Activated CD4-positive, alpha-beta T cell treated with anti-CD3 and anti-CD28 coated beads for 36 hours (primary cell): ENCODE measurements at regions of chr22 and their contacts with region 1.

Region 1: DNA sequence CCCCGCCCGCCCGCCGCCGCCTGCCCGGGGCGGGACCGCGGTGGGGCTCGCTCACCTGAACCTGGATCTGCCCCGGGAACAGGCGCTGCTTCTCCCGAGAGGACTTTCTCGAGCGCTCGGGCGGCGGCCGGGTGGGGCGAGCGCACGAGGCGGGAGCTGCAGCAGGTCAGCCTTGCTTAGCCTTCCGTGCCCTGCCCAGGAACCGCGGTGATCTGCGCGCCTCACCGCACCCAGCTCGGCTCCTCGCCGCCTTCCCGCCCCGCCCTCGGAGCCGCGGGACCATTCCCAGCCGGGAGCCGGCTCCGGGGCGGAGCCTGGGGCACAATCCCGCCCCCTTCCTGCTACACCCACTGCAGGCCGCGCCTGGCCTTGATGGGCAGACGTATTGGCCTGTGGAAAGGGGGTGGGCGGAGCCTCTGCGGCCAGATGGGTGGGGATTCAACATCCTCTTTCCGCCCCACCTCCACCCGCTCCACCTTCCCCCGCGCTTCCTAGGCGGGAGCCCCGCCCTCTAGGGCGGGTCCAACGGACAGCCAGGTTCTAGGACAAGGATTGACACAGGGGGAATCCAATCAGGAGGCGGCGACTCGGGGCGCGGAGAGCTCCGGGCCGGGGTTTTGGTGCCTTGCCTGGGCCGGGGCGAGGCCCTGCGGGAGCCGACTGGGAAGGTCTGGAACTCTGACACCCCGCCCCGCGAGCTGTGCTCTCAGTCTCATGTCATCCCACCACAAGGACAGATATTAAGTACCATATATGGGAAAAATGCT is at the start of gene MYH9:
- DNase-seq: peak; percentile 100
- ATAC-seq: peak; percentile 78
- H3K4me3 Mint-ChIP-seq: peak within 1 kb of the TSS; percentile 99
- H3K27ac Mint-ChIP-seq: peak within 1 kb of the TSS; percentile 98
- H3K4me1 Mint-ChIP-seq: peaks cover 30% of the 10 kb centered on the region
- H3K27me3 Mint-ChIP-seq: no peaks in the 10 kb centered on the region
- total RNA-seq, gene MYH9: 720 to 773 TPM

Region 2: DNA sequence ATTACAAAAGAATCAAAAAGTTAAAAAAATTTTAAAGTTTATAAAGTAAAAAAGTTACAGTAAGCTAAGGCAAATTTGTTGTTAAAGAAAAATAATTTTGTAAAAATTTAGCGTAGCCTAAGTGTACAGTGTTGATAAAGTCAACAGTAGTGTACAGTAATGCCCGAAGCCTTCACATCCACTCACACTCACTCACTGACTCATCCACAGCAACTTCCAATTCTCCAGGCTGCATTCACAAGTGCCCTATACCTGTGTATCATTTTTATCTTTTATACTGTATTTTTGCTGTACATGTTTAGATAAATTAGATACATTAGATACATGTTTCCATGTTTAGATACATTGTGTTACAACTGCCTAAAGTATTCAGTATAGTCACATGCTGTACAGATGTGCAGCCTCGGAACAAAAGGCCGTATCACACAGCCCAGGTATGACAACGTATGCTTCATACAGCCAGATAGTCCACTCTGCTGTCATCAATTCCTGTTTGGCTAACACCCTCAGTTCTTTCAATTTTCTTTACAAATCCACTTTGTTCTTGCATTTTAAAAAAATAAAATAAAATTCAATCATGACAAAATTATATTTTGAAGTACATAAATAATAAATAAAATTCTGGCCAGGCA is 440.0 kb before region 1 on chr22:
- CTCF ChIA-PET with region 1: no interaction called
- POLR2A ChIA-PET with region 1: no interaction called
- intact Hi-C with region 1: no loop called
- DNase-seq: no peak
- ATAC-seq: no peak
- H3K4me3 Mint-ChIP-seq: no peak overlapping the region
- H3K27ac Mint-ChIP-seq: no peak overlapping the region
- H3K4me1 Mint-ChIP-seq: no peaks in the 10 kb centered on the region
- H3K27me3 Mint-ChIP-seq: no peaks in the 10 kb centered on the region

Region 3: DNA sequence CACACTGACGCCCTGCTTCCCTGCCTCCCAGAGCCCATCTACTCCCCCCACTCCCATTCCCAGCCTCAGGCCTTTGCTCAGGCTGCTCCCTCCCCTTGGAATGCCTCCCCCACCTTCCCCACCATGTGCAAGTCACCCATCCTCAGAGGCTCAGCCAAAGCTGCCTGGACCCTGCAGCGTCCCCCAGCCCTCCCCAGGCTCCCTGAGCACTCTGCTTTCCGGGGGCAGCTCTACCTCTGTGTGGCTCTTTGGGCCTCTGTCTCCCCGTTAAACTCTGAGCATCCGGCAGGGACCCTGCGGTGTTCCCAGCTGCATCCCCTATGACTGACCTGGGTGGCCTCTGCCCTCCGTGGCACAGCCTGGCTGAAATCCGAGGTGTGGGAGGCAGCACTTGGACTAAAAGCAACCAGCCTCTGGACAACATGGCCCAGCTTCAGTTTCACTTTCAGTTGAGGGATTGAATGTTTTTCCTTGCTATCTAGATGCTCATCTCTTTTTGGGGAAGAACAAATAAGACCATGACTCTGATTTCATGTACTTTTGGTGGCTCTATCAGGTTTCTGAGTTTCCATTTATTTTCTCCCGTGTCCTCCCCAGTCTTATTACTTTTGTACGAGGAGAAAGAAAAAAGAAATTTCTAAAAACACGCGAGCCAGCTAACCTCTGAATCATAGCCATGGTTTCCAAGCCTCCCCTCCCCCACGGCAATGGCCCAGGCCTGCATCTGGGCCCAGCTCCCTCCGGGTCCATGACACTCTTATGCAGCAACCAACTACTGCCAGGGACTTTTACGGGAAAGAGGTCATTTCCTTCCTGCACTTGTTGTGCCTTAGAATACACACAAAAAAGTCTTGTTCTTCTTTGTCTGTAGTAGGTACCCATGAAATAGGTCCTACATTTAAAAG is 231.2 kb before region 1 on chr22:
- CTCF ChIA-PET with region 1: no interaction called
- POLR2A ChIA-PET with region 1: no interaction called
- intact Hi-C with region 1: loop called in 1 of 2 experiments (anchors 5 kb)
- DNase-seq: peak; percentile 89
- ATAC-seq: peak; percentile 72
- H3K4me3 Mint-ChIP-seq: peak overlapping the region; percentile 84
- H3K27ac Mint-ChIP-seq: peak overlapping the region; percentile 99
- H3K4me1 Mint-ChIP-seq: peaks cover 94% of the 10 kb centered on the region
- H3K27me3 Mint-ChIP-seq: no peaks in the 10 kb centered on the region

Region 4: GRCh38 chr22:36331306-36331911 is 56.5 kb before region 1 on chr22:
- CTCF ChIA-PET with region 1: interaction called, 18 read pairs
- POLR2A ChIA-PET with region 1: interaction called, 15 read pairs
- intact Hi-C with region 1: loop called (anchors 1 kb)
- DNase-seq: peak; percentile 88
- ATAC-seq: peak; percentile 51
- H3K4me3 Mint-ChIP-seq: peak overlapping the region; percentile 77
- H3K27ac Mint-ChIP-seq: peak overlapping the region; percentile 99
- H3K4me1 Mint-ChIP-seq: peaks cover 95% of the 10 kb centered on the region
- H3K27me3 Mint-ChIP-seq: no peaks in the 10 kb centered on the region

Region 5: GRCh38 chr22:36365020-36365411 is 22.9 kb before region 1 on chr22:
- CTCF ChIA-PET with region 1: interaction called, 6 read pairs
- POLR2A ChIA-PET with region 1: interaction called, 16 read pairs
- intact Hi-C with region 1: loop called (anchors 1 kb)
- DNase-seq: peak; percentile 96
- ATAC-seq: peak; percentile 89
- H3K4me3 Mint-ChIP-seq: peak overlapping the region; percentile 67
- H3K27ac Mint-ChIP-seq: peak overlapping the region; percentile 96
- H3K4me1 Mint-ChIP-seq: peaks cover 99% of the 10 kb centered on the region
- H3K27me3 Mint-ChIP-seq: no peaks in the 10 kb centered on the region

Region 6: DNA sequence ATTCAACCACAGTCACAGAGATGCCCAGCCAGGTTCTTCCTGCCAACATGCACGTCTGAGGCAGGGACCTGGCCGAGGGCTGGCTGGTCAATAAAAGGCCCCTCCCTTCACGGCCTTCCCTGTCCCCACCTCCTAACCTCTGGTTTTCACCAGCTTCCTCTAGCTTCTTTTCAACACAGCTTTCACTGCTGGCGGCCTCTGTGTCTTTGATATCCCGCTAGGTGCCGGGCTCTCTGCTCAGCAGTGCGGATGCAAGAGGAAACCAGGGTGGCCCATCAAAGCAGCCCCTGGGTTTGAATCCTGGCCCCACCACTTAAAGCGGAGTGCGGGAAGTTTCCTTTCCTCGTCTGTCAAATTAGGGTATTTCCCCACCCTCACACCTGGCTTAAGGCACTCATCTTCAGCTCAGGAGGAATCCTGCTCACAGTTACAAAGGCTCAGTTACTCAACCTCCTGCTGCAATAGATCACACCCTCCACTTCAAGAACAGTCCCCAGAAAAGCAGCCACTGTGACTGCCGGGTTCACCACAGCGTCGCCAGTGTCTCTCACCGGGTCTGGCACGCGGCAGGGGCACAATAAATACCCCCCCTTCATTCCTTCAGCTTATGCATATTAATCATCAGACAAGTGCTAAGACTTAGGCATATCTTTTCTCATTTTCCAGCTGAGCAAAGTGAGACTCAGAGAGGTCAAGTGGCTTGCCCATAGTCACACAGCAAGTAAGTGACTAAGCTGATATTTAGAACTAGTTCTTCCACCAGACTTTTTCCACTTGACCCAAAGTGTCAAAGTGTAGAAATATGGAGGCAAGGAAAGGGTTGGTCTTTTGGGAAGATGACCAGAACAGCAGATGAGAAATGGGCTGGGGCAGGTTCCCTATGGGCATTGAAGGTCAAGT is 47.8 kb after region 1 on chr22:
- CTCF ChIA-PET with region 1: no interaction called
- POLR2A ChIA-PET with region 1: interaction called, 5 read pairs
- intact Hi-C with region 1: loop called in 1 of 2 experiments (anchors 1 kb)
- DNase-seq: peak; percentile 75
- ATAC-seq: peak; percentile 86
- H3K4me3 Mint-ChIP-seq: peak overlapping the region; percentile 58
- H3K27ac Mint-ChIP-seq: peak overlapping the region; percentile 83
- H3K4me1 Mint-ChIP-seq: peaks cover 48% of the 10 kb centered on the region
- H3K27me3 Mint-ChIP-seq: no peaks in the 10 kb centered on the region

Region 7: GRCh38 chr22:36470162-36470993 is 82.4 kb after region 1 on chr22:
- CTCF ChIA-PET with region 1: interaction called, 5 read pairs
- POLR2A ChIA-PET with region 1: no interaction called
- intact Hi-C with region 1: loop called in 1 of 2 experiments (anchors 1 kb)
- DNase-seq: peak; percentile 89
- ATAC-seq: peak; percentile 94
- H3K4me3 Mint-ChIP-seq: no peak overlapping the region
- H3K27ac Mint-ChIP-seq: peak overlapping the region; percentile 72
- H3K4me1 Mint-ChIP-seq: peaks cover 29% of the 10 kb centered on the region
- H3K27me3 Mint-ChIP-seq: no peaks in the 10 kb centered on the region

Region 8: DNA sequence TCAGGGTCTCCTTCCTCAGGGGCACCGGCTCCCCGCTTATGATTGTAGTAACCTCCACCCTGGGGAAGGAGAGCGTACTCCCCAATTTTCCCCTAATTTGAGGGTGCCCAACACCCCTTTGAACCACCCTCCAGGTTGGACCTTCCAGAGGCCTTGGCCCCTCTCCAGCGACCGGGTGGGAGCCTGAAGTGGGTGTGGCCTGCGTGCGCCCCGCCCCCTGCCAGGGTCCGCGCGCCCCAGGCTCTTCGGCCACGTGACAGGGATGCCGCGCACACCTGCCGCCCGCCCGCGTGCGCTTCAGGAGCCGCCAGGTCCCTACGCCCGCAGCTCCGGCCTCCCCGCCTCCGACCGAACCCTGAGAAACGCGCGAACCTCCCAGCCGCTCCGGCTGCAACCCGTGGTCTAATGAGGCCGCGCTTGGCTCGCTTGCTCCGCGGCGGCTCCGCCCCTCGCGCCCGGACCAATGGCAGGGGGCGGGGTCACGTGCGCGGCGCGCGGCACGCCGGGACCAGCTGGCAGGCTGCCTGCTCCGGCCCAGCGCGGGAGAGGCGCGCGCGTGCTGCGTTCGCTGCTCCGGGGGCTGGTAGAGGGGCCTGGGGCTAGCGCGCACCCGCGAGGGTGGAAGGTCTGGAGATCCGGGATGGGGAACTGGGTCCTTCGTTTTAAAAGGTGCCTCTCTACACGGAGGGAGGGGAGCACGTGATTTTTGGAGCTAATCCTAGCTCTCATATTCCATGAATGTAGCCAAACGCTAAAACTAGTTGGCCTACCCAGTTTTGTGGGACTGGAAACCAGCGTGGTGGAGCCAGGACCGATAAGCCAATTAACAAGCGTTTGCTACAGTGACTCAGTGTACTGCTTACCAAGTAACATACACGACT is 118.9 kb after region 1 on chr22 and contains the start of gene FOXRED2:
- CTCF ChIA-PET with region 1: no interaction called
- POLR2A ChIA-PET with region 1: no interaction called
- intact Hi-C with region 1: no loop called
- DNase-seq: peak; percentile 94
- ATAC-seq: peak; percentile 95
- H3K4me3 Mint-ChIP-seq: peak within 1 kb of the TSS; percentile 49
- H3K27ac Mint-ChIP-seq: peak within 1 kb of the TSS; percentile 58
- H3K4me1 Mint-ChIP-seq: peaks cover 13% of the 10 kb centered on the region
- H3K27me3 Mint-ChIP-seq: no peaks in the 10 kb centered on the region
- total RNA-seq, gene FOXRED2: 15.7 to 16.6 TPM

Region 9: DNA sequence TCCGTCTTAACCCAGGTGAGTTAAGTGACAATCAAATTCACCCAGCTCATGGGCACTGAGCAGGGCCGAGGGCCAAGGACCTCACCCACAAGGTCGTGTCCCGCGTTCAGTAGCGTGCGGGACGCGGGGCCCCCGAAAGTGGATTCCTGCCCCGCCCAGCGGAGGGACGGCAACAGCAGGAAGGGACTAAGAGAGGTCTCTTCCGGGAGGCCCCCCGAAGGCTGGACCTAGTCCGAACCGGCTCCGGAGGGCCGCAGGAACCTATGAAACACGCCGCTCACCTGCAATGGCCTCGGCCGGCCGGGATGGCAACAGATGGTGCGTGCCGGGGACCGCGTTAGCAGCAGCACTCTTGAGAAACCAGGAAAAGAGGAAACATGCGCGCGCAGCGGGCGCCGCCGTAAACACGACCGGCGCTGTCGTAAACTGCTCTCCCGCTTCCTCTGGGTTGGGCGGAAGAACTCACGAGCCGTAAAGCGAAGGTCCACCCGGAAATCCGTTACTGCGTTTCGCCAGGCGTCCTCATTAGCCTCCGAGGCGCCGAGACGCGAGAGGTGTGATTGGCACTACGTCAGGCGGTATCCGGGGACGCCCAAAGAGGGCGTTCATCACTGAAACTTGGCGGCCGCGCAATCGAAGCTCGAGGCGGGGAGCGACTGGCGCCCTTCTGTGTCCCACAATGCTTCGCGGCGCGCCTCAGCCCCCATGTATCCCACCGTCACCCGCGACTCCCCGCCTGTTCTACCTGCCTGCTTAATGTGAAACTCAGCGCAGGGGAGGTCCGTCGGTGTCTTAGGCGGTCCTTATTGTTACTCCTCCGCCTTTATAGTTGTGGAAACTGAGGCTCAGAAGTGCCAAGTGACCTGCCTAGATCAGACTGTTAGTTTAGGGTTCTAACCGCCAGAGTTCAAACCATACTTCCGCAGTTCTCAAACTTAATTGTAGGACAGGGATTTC is 141.1 kb after region 1 on chr22 and contains the start of gene EIF3D:
- CTCF ChIA-PET with region 1: no interaction called
- POLR2A ChIA-PET with region 1: no interaction called
- intact Hi-C with region 1: loop called (anchors 1 to 5 kb)
- DNase-seq: peak; percentile 99
- ATAC-seq: peak; percentile 96
- H3K4me3 Mint-ChIP-seq: peak within 1 kb of the TSS; percentile 82
- H3K27ac Mint-ChIP-seq: peak within 1 kb of the TSS; percentile 99
- H3K4me1 Mint-ChIP-seq: peaks cover 25% of the 10 kb centered on the region
- H3K27me3 Mint-ChIP-seq: no peaks in the 10 kb centered on the region
- total RNA-seq, gene EIF3D: 359 to 403 TPM